HCT116 (cell line): ENCODE measurements at regions of chr15 and their contacts with region 1.

Region 1: DNA sequence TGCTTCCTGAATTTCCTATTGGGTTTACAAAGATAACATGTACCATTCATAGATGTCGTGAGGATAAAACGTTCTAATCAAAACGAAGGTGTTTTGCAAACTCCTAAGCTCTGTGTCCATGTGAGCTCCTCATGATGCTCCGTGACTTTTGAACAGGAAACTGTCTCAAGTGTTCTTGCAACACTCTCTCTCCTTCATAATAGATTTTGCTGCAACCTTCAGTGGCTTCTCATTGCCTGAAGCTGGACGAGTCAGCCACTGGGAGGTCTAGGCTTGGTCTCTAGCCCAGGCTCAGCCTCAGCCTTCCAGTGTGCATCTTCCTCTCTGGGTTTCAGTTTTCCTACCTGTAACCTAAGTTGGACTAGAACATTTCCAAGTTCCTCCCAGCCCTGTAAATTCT is 18.7 kb upstream of the BCL2A1 start:
- DNase-seq: no peak
- ATAC-seq: no peak
- H3K4me3 ChIP-seq: no peak overlapping the region
- H3K27ac ChIP-seq: no peak overlapping the region
- H3K4me1 ChIP-seq: peaks cover 3 to 10% of the 10 kb centered on the region in 2 experiments; a peak in 3 of 4 replicates
- H3K27me3 ChIP-seq: peaks cover 4% of the 10 kb centered on the region; the same call in 1 of the 2 replicates
- CTCF ChIP-seq: no peak
- POLR2A ChIP-seq: no peak
- RAD21 ChIP-seq: no peak

Region 2: DNA sequence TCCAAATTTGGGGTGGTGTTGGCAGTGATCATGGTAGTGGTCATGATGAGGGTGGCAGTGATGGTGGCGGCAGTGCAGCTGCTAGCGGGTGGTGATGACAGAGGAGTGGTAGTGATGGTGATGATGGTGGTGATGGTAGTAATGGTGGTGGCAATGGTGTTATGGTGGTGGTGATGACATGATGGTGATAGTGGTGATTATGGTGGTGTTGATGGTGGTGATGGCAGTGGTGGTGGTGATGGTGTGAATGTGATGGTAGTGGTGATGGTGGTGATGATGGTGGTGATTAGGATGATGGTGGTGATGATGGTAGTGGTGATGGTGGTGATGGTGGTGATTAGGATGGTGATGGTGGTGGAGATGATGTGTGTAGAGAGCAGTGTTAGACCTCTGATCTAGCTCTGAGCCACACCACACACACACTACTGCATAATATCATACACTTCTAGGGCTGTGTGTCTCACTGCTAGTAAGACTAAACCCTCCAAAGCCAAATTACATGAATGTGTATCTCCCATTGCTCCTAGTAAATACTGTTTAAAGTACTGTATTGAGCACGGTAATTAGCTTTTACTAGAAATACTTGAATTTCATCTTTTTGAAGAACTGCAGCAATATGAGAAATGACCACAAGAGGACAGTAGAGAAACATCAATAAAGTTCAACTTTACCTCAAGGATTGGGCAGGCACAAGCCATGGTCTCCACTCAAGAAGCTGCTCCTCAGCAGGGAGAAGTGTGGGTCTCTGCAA is 649.9 kb before region 1 on chr15:
- CTCF ChIA-PET with region 1: no interaction called
- POLR2A ChIA-PET with region 1: no interaction called
- RAD21 ChIA-PET with region 1: no interaction called
- intact Hi-C with region 1: loop called (anchors 1 kb)
- DNase-seq: peak; percentile 29
- ATAC-seq: peak; percentile 70
- H3K4me3 ChIP-seq: no peak overlapping the region
- H3K27ac ChIP-seq: no peak overlapping the region
- H3K4me1 ChIP-seq: no peaks in the 10 kb centered on the region
- H3K27me3 ChIP-seq: no peaks in the 10 kb centered on the region
- CTCF ChIP-seq: peak; percentile 67 to 96 (median 76); a peak in 5 of 6 replicates
- POLR2A ChIP-seq: no peak
- RAD21 ChIP-seq: peak; percentile 72

Region 3: DNA sequence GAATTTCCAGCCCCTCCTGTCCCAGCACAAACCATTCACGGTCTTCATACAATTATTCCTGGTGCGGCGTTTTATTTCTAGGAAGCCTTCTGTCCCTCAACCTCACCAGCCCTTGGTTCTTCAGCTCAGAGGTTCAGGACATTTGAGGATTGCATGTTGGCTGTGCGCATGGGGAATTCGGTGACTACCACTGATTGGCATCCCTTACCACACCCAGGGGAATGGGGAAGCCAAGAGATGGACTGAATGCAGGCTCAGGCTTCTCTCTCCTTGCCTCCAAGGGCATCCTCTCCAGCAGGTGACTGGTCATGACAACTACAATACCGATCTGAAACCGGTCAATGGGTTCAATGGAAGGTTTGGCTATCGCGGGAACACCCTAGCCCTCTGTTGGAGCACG is 246.7 kb before region 1 on chr15:
- CTCF ChIA-PET with region 1: no interaction called
- POLR2A ChIA-PET with region 1: no interaction called
- RAD21 ChIA-PET with region 1: no interaction called
- intact Hi-C with region 1: no loop called
- DNase-seq: no peak
- ATAC-seq: no peak
- H3K4me3 ChIP-seq: no peak overlapping the region
- H3K27ac ChIP-seq: no peak overlapping the region
- H3K4me1 ChIP-seq: peaks cover 0 to 5% of the 10 kb centered on the region in 2 experiments; a peak in 1 of 4 replicates
- H3K27me3 ChIP-seq: no peaks in the 10 kb centered on the region
- CTCF ChIP-seq: no peak
- POLR2A ChIP-seq: no peak
- RAD21 ChIP-seq: no peak

Region 4: GRCh38 chr15:79769069-79769481 is 220.6 kb before region 1 on chr15:
- CTCF ChIA-PET with region 1: no interaction called
- POLR2A ChIA-PET with region 1: no interaction called
- RAD21 ChIA-PET with region 1: no interaction called
- intact Hi-C with region 1: loop called (anchors 1 kb)
- DNase-seq: peak; percentile 10
- ATAC-seq: peak; percentile 84
- H3K4me3 ChIP-seq: no peak overlapping the region
- H3K27ac ChIP-seq: no peak overlapping the region
- H3K4me1 ChIP-seq: no peaks in the 10 kb centered on the region
- H3K27me3 ChIP-seq: peaks cover 34% of the 10 kb centered on the region
- CTCF ChIP-seq: peak; percentile 60 to 72 (median 61); a peak in 5 of 6 replicates
- POLR2A ChIP-seq: no peak
- RAD21 ChIP-seq: peak; percentile 67

Region 5: GRCh38 chr15:79896637-79897379 is 92.9 kb before region 1 on chr15 and contains the start of gene MTHFS:
- CTCF ChIA-PET with region 1: no interaction called
- POLR2A ChIA-PET with region 1: no interaction called
- RAD21 ChIA-PET with region 1: interaction called in 1 of 2 experiments, 6 read pairs
- intact Hi-C with region 1: loop called (anchors 1 kb)
- DNase-seq: peak; percentile 63
- ATAC-seq: peak; percentile 95
- H3K4me3 ChIP-seq: peak within 1 kb of the TSS; percentile 81 to 90
- H3K27ac ChIP-seq: peak within 1 kb of the TSS; percentile 93
- H3K4me1 ChIP-seq: peaks cover 0 to 17% of the 10 kb centered on the region in 2 experiments; a peak in 2 of 4 replicates
- H3K27me3 ChIP-seq: no peaks in the 10 kb centered on the region
- CTCF ChIP-seq: peak; percentile 18 to 49 (median 36); a peak in 3 of 6 replicates
- POLR2A ChIP-seq: peak; percentile 91
- RAD21 ChIP-seq: peak; percentile 37; the same call in 1 of the 2 replicates
- total RNA-seq, gene MTHFS: 30.5 TPM